AG04449 (cell line): ENCODE measurements at regions of chr6 and their contacts with region 1.

Region 1: DNA sequence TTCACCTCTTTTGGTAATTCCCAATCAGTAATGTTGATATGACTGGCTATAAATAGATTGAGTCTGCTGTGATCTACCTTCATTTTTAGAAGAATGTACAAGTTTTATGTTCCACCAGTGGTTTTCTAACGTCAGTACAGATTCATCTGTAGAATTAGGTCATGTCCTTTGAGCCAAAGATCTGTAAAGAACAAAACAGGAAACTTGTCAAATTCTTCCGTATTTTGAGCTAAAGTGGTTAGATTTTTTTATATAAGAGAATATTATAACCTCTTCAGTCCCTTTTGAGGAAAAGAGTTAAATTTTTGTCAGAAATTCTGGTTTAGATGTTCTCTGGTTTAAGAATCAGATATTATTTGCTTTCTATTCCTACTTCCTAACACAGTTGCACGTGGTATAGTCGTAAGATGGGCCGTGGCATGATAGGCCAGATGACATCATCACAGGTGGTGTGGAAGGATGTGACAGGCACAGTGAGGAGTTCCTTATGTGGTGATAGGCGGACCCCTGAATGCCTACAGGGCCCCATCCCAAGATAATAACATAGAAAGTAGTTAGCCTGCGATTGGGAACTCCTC is 62.3 kb downstream of the SNX9 start:
- DNase-seq: no peak
- H3K4me3 ChIP-seq: no peak overlapping the region
- CTCF ChIP-seq: no peak

Region 2: GRCh38 chr6:157774153-157775135 is 110.9 kb before region 1 on chr6:
- CTCF ChIA-PET with region 1: no interaction called
- POLR2A ChIA-PET with region 1: no interaction called
- DNase-seq: no peak
- H3K4me3 ChIP-seq: no peak overlapping the region
- CTCF ChIP-seq: no peak

Region 3: GRCh38 chr6:157898169-157898568 is 12.9 kb after region 1 on chr6:
- CTCF ChIA-PET with region 1: interaction called, 11 read pairs
- POLR2A ChIA-PET with region 1: no interaction called
- DNase-seq: no peak
- H3K4me3 ChIP-seq: no peak overlapping the region
- CTCF ChIP-seq: peak; percentile 22